ENCODE measurements at regions of chr9 and their contacts with region 1.

Region 1: GRCh38 chr9:14768405-14769229 is 46.1 kb upstream of the CER1 start:
- DNase-seq: no peak
- ATAC-seq: peak; percentile 69
- H3K4me3 ChIP-seq: no peak overlapping the region
- H3K27ac ChIP-seq: no peak overlapping the region
- H3K4me1 ChIP-seq: no peaks in the 10 kb centered on the region
- H3K27me3 ChIP-seq: no peaks in the 10 kb centered on the region
- CTCF ChIP-seq: peak; percentile 79

Region 2: GRCh38 chr9:14616188-14616982 is 152.2 kb before region 1 on chr9:
- intact Hi-C with region 1: loop called (anchors 10 kb)
- DNase-seq: no peak
- ATAC-seq: peak; percentile 66
- H3K4me3 ChIP-seq: no peak overlapping the region
- H3K27ac ChIP-seq: no peak overlapping the region
- H3K4me1 ChIP-seq: no peaks in the 10 kb centered on the region
- H3K27me3 ChIP-seq: no peaks in the 10 kb centered on the region
- CTCF ChIP-seq: peak; percentile 74